H1 (cell line): ENCODE measurements at regions of chr20 and their contacts with region 1.

Region 1: GRCh38 chr20:5100684-5101347 is 18.9 kb downstream of the PCNA start:
- DNase-seq: peak in 1 of 2 experiments; percentile 89
- H3K4me3 ChIP-seq: no peak overlapping the region
- H3K27ac ChIP-seq: no peak overlapping the region
- H3K4me1 ChIP-seq: no peaks in the 10 kb centered on the region
- H3K27me3 ChIP-seq: no peaks in the 10 kb centered on the region
- CTCF ChIP-seq: peak; percentile 73 to 77 (median 75)
- EP300 ChIP-seq: no peak
- POLR2A ChIP-seq: no peak
- RAD21 ChIP-seq: peak; percentile 78 to 80

Region 2: GRCh38 chr20:4973330-4974097 is 127.3 kb before region 1 on chr20:
- CTCF ChIA-PET with region 1: interaction called, 10 read pairs
- POLR2A ChIA-PET with region 1: interaction called, 3 read pairs
- DNase-seq: no peak
- H3K4me3 ChIP-seq: no peak overlapping the region
- H3K27ac ChIP-seq: no peak overlapping the region
- H3K4me1 ChIP-seq: peaks cover 0 to 5% (median 3%) of the 10 kb centered on the region in 4 experiments; a peak in 2 of 7 replicates
- H3K27me3 ChIP-seq: no peaks in the 10 kb centered on the region
- CTCF ChIP-seq: no peak
- EP300 ChIP-seq: no peak
- POLR2A ChIP-seq: no peak
- RAD21 ChIP-seq: no peak

Region 3: DNA sequence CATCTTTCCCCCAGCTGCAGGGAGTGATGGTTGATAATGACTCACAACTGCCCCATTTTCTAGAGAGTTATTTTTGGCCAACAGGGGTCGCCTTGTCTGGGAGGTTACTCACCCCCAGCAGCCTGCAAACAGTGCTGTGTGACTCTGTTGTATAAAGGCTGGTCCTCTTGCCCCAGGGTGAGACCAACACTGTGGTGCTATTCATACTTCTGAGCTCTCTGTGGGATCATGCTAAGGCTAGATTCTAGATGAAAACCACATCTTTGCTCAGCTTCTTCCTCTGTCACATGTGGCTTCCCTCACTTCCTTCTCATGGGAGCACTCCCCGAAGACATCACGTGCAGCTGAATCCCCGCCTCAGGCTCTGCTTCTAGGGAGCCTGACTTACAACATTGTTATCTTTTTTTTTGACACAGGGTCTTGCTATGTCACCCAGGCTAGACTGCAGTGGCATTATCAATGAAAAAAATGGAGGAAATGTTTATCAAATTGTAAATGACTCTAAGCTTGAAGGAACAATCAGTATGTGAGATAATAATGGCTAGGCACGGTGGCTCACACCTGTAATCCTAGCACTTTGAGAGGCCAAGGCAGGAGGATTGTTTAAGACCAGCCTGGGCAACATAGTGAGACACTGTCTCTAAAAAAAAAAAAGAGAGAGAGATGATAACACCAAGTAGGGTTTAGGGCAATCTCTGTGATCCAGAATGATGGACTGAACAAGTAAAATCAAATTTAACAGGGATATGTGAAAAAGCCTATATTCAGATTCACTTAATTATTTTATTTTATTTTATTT is 43.8 kb before region 1 on chr20:
- CTCF ChIA-PET with region 1: interaction called, 19 read pairs
- POLR2A ChIA-PET with region 1: no interaction called
- DNase-seq: peak in 1 of 2 experiments; percentile 69
- H3K4me3 ChIP-seq: no peak overlapping the region
- H3K27ac ChIP-seq: no peak overlapping the region
- H3K4me1 ChIP-seq: no peaks in the 10 kb centered on the region
- H3K27me3 ChIP-seq: no peaks in the 10 kb centered on the region
- CTCF ChIP-seq: peak; percentile 53 to 66 (median 56)
- EP300 ChIP-seq: no peak
- POLR2A ChIP-seq: no peak
- RAD21 ChIP-seq: peak; percentile 42 to 45; a peak in 3 of 4 replicates

Region 4: GRCh38 chr20:5078399-5078958 is 22.3 kb before region 1 on chr20:
- CTCF ChIA-PET with region 1: interaction called, 17 read pairs
- POLR2A ChIA-PET with region 1: interaction called, 16 read pairs
- DNase-seq: no peak
- H3K4me3 ChIP-seq: no peak overlapping the region
- H3K27ac ChIP-seq: no peak overlapping the region
- H3K4me1 ChIP-seq: peaks cover 0 to 4% (median 2%) of the 10 kb centered on the region in 4 experiments; a peak in 4 of 7 replicates
- H3K27me3 ChIP-seq: no peaks in the 10 kb centered on the region
- CTCF ChIP-seq: no peak
- EP300 ChIP-seq: no peak
- POLR2A ChIP-seq: no peak
- RAD21 ChIP-seq: no peak

Region 5: DNA sequence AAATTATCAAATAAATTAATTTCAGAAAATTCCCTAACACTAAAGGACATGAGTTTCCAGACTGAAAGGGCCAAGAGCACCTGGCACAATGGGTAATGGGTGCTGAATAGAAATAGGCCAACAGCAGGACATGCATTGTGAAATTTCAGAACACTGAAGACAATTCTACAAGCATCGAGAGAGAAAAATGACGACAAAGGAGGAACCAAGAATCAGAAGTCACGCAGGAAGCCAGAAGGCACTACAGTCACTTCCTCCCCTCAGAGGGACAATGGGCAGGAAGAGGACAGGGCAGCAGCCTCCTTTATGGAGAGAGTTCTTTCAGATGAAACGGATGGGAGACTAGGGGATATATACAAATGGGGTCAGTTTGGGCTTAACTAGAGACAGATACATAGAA is 10.6 kb before region 1 on chr20:
- CTCF ChIA-PET with region 1: interaction called, 14 read pairs
- POLR2A ChIA-PET with region 1: interaction called, 5 read pairs
- DNase-seq: no peak
- H3K4me3 ChIP-seq: no peak overlapping the region
- H3K27ac ChIP-seq: no peak overlapping the region
- H3K4me1 ChIP-seq: no peaks in the 10 kb centered on the region
- H3K27me3 ChIP-seq: no peaks in the 10 kb centered on the region
- CTCF ChIP-seq: no peak
- EP300 ChIP-seq: no peak
- POLR2A ChIP-seq: no peak
- RAD21 ChIP-seq: no peak

Region 6: GRCh38 chr20:5119435-5120188 is 18.8 kb after region 1 on chr20 and contains the start of gene PCNA:
- CTCF ChIA-PET with region 1: no interaction called
- POLR2A ChIA-PET with region 1: interaction called, 23 read pairs
- DNase-seq: peak; percentile 92 to 93
- H3K4me3 ChIP-seq: peak within 1 kb of the TSS; percentile 91 to 99 (median 96)
- H3K27ac ChIP-seq: peak within 1 kb of the TSS; percentile 99
- H3K4me1 ChIP-seq: peaks cover 0 to 1% (median 0%) of the 10 kb centered on the region in 4 experiments; a peak in 1 of 7 replicates
- H3K27me3 ChIP-seq: no peaks in the 10 kb centered on the region
- CTCF ChIP-seq: no peak
- EP300 ChIP-seq: no peak
- POLR2A ChIP-seq: peak; percentile 99 to 100
- RAD21 ChIP-seq: no peak
- total RNA-seq, gene PCNA: 286 and 290 TPM in 2 replicates